Activated CD8-positive, alpha-beta T cell treated with anti-CD3 and anti-CD28 coated beads, Interleukin-2, amount 10 ng/mL, durations not matched to agents 7 days and 5 days (primary cell): ENCODE measurements at regions of chr10 and their contacts with region 1.

Region 1: GRCh38 chr10:91298224-91298871 is 77.9 kb downstream of the PCGF5 start:
- DNase-seq: peak; percentile 87
- ATAC-seq: peak; percentile 96
- H3K4me3 Mint-ChIP-seq: peak overlapping the region; percentile 61
- H3K27ac Mint-ChIP-seq: peak overlapping the region; percentile 10
- H3K4me1 Mint-ChIP-seq: peaks cover 17% of the 10 kb centered on the region
- H3K27me3 Mint-ChIP-seq: peaks cover 21% of the 10 kb centered on the region

Region 2: GRCh38 chr10:90912174-90912573 is 386.2 kb before region 1 on chr10:
- CTCF ChIA-PET with region 1: interaction called, 10 read pairs
- POLR2A ChIA-PET with region 1: no interaction called
- DNase-seq: no peak
- ATAC-seq: no peak
- H3K4me3 Mint-ChIP-seq: no peak overlapping the region
- H3K27ac Mint-ChIP-seq: no peak overlapping the region
- H3K4me1 Mint-ChIP-seq: peaks cover 2% of the 10 kb centered on the region
- H3K27me3 Mint-ChIP-seq: peaks cover 7% of the 10 kb centered on the region

Region 3: GRCh38 chr10:91311601-91312381 is 13.4 kb after region 1 on chr10:
- CTCF ChIA-PET with region 1: interaction called, 43 read pairs
- POLR2A ChIA-PET with region 1: interaction called, 3 read pairs
- DNase-seq: no peak
- ATAC-seq: no peak
- H3K4me3 Mint-ChIP-seq: no peak overlapping the region
- H3K27ac Mint-ChIP-seq: no peak overlapping the region
- H3K4me1 Mint-ChIP-seq: no peaks in the 10 kb centered on the region
- H3K27me3 Mint-ChIP-seq: peaks cover 14% of the 10 kb centered on the region

Region 4: GRCh38 chr10:91389636-91390512 is 91.5 kb after region 1 on chr10:
- CTCF ChIA-PET with region 1: interaction called, 20 read pairs
- POLR2A ChIA-PET with region 1: no interaction called
- DNase-seq: peak; percentile 44
- ATAC-seq: peak; percentile 96
- H3K4me3 Mint-ChIP-seq: no peak overlapping the region
- H3K27ac Mint-ChIP-seq: no peak overlapping the region
- H3K4me1 Mint-ChIP-seq: peaks cover 6% of the 10 kb centered on the region
- H3K27me3 Mint-ChIP-seq: peaks cover 26% of the 10 kb centered on the region

Region 5: GRCh38 chr10:91590142-91590903 is 292.0 kb after region 1 on chr10:
- CTCF ChIA-PET with region 1: no interaction called
- POLR2A ChIA-PET with region 1: no interaction called
- DNase-seq: no peak
- ATAC-seq: no peak
- H3K4me3 Mint-ChIP-seq: no peak overlapping the region
- H3K27ac Mint-ChIP-seq: no peak overlapping the region
- H3K4me1 Mint-ChIP-seq: no peaks in the 10 kb centered on the region
- H3K27me3 Mint-ChIP-seq: peaks cover 8% of the 10 kb centered on the region

Region 6: DNA sequence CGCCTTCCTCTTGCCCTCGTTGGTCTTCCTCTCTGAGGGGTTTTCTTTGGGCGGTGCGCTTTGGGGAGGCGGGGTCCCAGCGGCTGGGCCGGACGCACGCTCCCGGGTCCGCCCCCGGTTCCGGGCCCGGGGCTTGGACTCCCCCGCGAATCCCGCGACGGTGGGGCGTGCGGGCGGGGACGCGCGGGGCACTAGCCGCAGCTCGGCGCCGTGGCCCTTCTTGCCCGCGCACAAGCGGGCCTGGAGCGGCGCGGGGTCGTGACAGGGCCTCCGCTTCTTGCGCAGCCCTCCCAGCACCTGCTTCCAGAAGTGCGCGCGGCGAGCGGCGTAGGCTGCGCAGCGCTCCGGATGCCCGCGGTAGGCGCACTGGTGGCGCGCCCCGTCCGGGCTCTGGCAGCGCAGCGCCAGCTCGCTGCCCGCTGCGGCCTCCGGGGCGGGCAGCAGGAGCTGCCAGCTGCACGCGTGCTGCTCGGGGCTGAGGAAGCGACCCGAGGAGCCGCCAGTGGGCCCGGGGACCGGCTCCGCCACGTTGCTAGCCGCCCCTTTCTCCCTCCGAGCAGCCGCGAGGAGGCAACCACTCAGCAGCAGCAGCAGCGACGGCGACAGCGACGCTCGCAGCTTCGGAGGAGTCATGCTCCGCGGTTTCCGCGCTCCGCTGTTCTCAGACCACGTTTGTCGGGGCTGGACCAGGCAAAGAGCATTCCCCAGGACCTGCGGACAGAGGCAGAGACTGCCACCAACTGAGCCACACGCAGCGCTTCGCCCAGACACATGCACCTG is 610.2 kb after region 1 on chr10:
- CTCF ChIA-PET with region 1: interaction called, 24 read pairs
- POLR2A ChIA-PET with region 1: no interaction called
- DNase-seq: peak; percentile 78
- ATAC-seq: peak; percentile 91
- H3K4me3 Mint-ChIP-seq: peak overlapping the region; percentile 88
- H3K27ac Mint-ChIP-seq: peak overlapping the region; percentile 86
- H3K4me1 Mint-ChIP-seq: peaks cover 23% of the 10 kb centered on the region
- H3K27me3 Mint-ChIP-seq: peaks cover 9% of the 10 kb centered on the region